MCF 10A (cell line): ENCODE measurements at regions of chr4 and their contacts with region 1.

Region 1: GRCh38 chr4:94757192-94758139 is at the start of gene BMPR1B:
- DNase-seq: peak; percentile 80
- H3K4me3 Mint-ChIP-seq: peak within 1 kb of the TSS; percentile 85
- H3K27ac Mint-ChIP-seq: peak within 1 kb of the TSS; percentile 96
- H3K4me1 Mint-ChIP-seq: peaks cover 25% of the 10 kb centered on the region
- H3K27me3 Mint-ChIP-seq: no peaks in the 10 kb centered on the region
- CTCF ChIP-seq: peak; percentile 16
- total RNA-seq, gene BMPR1B: 17.2 and 18.8 TPM in 2 replicates

Region 2: DNA sequence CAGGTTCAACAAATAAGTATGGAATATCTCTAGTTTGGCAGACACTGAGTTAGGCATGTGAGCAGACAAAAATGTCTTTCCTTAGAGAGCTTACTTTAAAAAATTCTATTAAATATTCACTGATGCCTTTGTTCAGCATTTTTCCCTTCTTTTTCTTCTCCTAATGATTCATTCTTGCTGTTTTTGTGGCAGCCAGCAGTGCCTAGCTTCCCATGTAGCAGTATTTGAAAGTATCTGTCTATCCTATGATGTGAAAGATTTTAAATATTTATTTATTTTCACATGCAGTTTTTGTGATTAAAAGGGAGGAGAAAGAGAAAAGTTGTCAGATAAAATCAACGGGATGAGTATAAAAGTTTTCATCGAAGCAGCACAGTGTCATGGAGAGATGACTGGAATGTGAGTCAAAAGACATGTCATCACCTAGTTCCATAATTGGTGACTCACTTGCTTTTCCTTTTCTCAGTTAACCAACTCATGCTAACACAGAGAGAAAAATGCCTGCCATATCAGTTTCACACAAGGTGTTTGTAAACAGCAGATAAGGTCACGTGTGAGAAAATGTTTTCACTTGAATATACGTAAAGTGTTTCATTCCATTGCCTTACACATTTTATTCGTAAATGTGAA is 70.1 kb after region 1 on chr4:
- CTCF ChIA-PET with region 1: interaction called, 4 read pairs
- POLR2A ChIA-PET with region 1: interaction called, 37 read pairs
- intact Hi-C with region 1: loop called (anchors 1 kb)
- DNase-seq: peak; percentile 86
- H3K4me3 Mint-ChIP-seq: peak overlapping the region; percentile 8
- H3K27ac Mint-ChIP-seq: peak overlapping the region; percentile 74
- H3K4me1 Mint-ChIP-seq: peaks cover 14% of the 10 kb centered on the region
- H3K27me3 Mint-ChIP-seq: no peaks in the 10 kb centered on the region
- CTCF ChIP-seq: no peak

Region 3: GRCh38 chr4:94934201-94934600 is 176.7 kb after region 1 on chr4:
- CTCF ChIA-PET with region 1: interaction called, 3 read pairs
- POLR2A ChIA-PET with region 1: interaction called, 6 read pairs
- intact Hi-C with region 1: loop called (anchors 2 kb)
- DNase-seq: peak; percentile 60
- H3K4me3 Mint-ChIP-seq: peak overlapping the region; percentile 60
- H3K27ac Mint-ChIP-seq: peak overlapping the region; percentile 88
- H3K4me1 Mint-ChIP-seq: peaks cover 40% of the 10 kb centered on the region
- H3K27me3 Mint-ChIP-seq: no peaks in the 10 kb centered on the region
- CTCF ChIP-seq: no peak